Activated naive CD4-positive, alpha-beta T cell treated with anti-CD3 and anti-CD28 coated beads for 36 hours (primary cell): ENCODE measurements at regions of chr17 and their contacts with region 1.

Region 1: DNA sequence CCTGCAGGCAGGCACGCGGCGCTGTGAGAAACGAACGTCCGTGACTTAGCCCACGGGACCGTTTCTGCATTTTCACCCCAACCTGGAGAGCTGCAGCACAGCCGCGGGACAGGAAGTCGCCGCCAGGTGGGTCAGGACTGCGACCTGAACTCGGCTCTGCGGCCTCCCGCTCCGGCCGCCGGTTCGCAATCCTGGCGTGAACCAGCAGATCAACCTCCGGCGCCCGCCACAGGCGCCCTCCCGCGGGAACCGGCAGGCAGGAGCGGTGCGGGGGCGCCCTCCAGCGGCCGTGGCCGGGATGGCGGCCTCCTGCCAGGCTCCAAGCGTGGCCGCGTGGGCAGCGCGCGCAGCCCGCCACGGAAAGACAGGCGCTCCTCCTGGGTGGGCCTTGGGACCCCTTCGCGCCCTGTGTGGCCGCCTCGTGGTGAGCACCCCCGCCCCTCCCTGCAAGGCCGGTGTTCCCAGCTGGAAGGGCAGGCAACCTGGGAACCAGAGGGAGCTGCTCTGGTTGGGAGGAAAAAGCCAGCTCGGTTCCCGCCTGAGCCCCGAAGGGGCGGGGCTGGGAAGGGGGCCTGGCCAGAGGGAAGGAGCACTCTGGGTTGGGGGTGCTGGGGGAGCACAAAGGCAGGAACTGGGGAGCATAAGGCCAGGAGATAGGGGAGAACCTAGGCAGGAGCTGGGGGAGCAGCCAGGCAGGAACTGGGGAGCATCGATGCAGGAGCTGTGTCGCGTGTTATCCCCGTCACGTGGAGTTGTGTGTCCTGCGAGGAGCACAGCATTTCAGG is 28.2 kb downstream of the ACTG1 start:
- DNase-seq: peak; percentile 88
- H3K4me3 Mint-ChIP-seq: peak overlapping the region; percentile 18
- H3K27ac Mint-ChIP-seq: no peak overlapping the region
- H3K4me1 Mint-ChIP-seq: peaks cover 20% of the 10 kb centered on the region
- H3K27me3 Mint-ChIP-seq: peaks cover 21% of the 10 kb centered on the region

Region 2: GRCh38 chr17:81142301-81143199 is 341.8 kb before region 1 on chr17:
- CTCF ChIA-PET with region 1: interaction called, 7 read pairs
- intact Hi-C with region 1: loop called (anchors 1 kb)
- DNase-seq: peak; percentile 76
- H3K4me3 Mint-ChIP-seq: no peak overlapping the region
- H3K27ac Mint-ChIP-seq: no peak overlapping the region
- H3K4me1 Mint-ChIP-seq: no peaks in the 10 kb centered on the region
- H3K27me3 Mint-ChIP-seq: no peaks in the 10 kb centered on the region

Region 3: DNA sequence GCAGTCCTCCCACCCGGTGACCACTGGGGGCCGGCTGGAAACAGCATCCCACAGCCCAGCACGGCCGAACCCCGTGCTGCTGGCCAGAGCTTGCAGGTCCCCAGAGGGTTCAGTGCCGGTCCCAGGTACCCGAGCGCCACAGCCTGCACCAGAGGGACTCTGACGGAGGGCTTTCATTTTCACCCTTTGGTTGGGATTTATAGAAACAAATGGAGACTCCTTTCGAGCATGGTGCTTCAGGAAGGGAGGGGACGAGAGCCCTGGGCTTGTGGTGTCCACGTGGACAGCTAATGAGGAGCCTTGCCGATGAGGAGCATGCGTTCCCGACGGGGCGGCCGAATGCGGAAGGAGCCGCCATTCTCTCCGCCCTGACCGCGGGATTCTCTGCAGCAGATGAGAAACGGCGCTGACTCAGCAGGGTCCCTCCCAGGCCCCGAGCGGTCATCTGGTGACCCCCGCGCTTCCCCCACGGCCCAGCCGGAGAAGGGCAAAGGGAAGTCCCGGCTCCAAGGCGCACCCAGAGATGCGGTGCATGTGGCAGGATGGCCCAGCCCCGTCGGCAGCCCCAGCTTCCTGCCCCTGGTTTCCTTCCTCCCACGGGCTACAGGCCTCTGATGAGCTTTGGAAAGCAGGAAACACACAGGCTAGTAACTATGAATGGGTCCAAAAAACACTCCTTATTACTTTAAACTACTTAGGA is 199.1 kb before region 1 on chr17:
- CTCF ChIA-PET with region 1: interaction called, 27 read pairs
- intact Hi-C with region 1: no loop called
- DNase-seq: peak; percentile 79
- H3K4me3 Mint-ChIP-seq: peak overlapping the region; percentile 83
- H3K27ac Mint-ChIP-seq: peak overlapping the region; percentile 87
- H3K4me1 Mint-ChIP-seq: peaks cover 34% of the 10 kb centered on the region
- H3K27me3 Mint-ChIP-seq: no peaks in the 10 kb centered on the region

Region 4: DNA sequence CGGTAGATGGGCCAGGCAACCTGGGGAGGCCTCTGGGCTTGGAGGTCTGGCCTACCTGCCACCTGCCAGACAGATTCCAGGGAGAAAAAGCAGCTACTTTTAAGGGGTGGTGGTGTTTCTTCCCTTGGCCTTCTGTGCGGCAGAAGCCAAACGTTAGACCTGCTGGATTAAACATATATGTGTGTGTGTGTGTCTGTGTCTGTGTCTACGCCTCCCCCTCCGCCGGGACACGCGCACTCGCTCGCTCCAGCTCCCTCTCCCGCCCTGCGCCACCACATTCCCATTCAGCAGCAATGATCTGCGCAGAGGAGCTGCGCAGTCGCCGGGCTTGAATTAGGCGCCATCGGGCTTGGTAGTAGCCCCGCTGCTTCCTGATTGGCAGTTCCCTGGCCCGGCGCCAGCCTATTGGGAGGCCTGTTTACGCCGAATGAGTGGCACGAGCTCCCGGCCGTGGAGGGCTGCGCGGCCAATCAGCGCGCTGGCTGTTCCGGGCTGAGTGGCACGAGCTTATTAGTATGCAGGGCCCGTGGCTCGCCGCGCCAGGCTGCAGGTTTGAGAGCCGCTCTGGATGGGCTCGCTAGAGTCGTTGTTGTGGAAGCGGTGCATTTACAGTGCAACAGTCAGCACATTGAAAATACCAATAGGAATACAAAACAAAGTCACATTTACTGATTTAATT is 89.3 kb before region 1 on chr17 and contains the start of gene BAHCC1:
- CTCF ChIA-PET with region 1: interaction called, 4 read pairs
- intact Hi-C with region 1: loop called (anchors 5 kb)
- DNase-seq: peak; percentile 95
- H3K4me3 Mint-ChIP-seq: peak within 1 kb of the TSS; percentile 54
- H3K27ac Mint-ChIP-seq: no peak within 1 kb of the TSS
- H3K4me1 Mint-ChIP-seq: peaks cover 29% of the 10 kb centered on the region
- H3K27me3 Mint-ChIP-seq: peaks cover 53% of the 10 kb centered on the region
- total RNA-seq, gene BAHCC1: 0.02 TPM in 1 of 2 experiments, not detected in the other

Region 5: GRCh38 chr17:81428948-81429774 is 55.2 kb before region 1 on chr17:
- CTCF ChIA-PET with region 1: no interaction called
- intact Hi-C with region 1: no loop called
- DNase-seq: no peak
- H3K4me3 Mint-ChIP-seq: no peak overlapping the region
- H3K27ac Mint-ChIP-seq: no peak overlapping the region
- H3K4me1 Mint-ChIP-seq: peaks cover 12% of the 10 kb centered on the region
- H3K27me3 Mint-ChIP-seq: peaks cover 21% of the 10 kb centered on the region